Cardiac septum (tissue), 1 donor: ENCODE measurements at regions of chr1 and their contacts with region 1.

Region 1: DNA sequence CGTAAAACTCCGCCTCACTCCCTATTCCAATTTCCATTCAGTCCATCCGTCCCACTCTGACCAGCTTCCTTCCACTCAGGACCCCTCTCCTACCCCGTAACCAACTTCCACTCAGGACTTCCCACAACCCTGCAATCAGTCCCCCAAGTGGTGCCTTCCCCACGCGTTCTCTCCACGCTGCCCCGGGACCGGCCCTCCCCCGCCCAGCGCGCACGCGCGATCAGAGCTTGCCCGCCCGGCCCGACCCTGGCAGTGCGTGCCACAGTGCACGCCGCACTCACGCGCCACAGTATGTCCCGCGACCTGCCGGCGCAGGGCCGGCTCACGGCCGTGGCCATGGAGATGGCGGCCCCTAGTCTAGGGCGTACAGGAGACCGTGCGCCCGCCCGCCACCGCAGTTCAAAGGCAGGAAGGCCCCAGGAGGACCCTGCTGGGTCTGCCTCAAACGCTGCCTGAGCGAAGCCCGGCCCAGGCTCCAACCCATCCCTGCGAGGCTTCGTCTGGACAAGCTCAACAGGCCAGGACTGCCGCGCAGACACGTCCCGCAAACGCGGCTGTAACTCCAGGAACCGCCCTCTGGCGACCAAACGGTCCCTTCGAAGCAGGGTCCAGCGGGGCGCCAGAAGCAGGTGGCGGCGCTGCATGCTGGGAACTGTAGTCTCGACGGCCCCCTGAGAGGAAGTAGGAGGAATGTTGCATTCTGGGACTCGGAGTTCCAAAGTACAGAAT is at the start of gene NDC1:
- DNase-seq: peak; percentile 93
- total RNA-seq, gene NDC1: 6.0 TPM

Region 2: GRCh38 chr1:54764133-54764921 is 926.2 kb after region 1 on chr1 and contains the start of gene PARS2:
- intact Hi-C with region 1: loop called (anchors 5 kb)
- DNase-seq: peak; percentile 98
- total RNA-seq, gene PARS2: 3.8 TPM